Activated T-helper 1 cell treated with anti-CD3 and anti-CD28 coated beads, Interleukin-12 subunit alpha, Interleukin-12 subunit beta, Interleukin-2, Interleukin-4 antibody, amounts not matched to agents 30 ng/mL and 10 ng/mL and 1 ng/mL, durations not matched to agents 14 hours and 24 hours and 36 hours (primary cell): ENCODE measurements at regions of chr3 and their contacts with region 1.

Region 1: GRCh38 chr3:50950591-50950990 is 275.9 kb downstream of the DOCK3 start:
- DNase-seq: no peak
- H3K4me3 Mint-ChIP-seq: peak overlapping the region; percentile 67
- H3K27ac Mint-ChIP-seq: no peak overlapping the region
- H3K4me1 Mint-ChIP-seq: peaks cover 15% of the 10 kb centered on the region
- H3K27me3 Mint-ChIP-seq: peaks cover 8% of the 10 kb centered on the region

Region 2: DNA sequence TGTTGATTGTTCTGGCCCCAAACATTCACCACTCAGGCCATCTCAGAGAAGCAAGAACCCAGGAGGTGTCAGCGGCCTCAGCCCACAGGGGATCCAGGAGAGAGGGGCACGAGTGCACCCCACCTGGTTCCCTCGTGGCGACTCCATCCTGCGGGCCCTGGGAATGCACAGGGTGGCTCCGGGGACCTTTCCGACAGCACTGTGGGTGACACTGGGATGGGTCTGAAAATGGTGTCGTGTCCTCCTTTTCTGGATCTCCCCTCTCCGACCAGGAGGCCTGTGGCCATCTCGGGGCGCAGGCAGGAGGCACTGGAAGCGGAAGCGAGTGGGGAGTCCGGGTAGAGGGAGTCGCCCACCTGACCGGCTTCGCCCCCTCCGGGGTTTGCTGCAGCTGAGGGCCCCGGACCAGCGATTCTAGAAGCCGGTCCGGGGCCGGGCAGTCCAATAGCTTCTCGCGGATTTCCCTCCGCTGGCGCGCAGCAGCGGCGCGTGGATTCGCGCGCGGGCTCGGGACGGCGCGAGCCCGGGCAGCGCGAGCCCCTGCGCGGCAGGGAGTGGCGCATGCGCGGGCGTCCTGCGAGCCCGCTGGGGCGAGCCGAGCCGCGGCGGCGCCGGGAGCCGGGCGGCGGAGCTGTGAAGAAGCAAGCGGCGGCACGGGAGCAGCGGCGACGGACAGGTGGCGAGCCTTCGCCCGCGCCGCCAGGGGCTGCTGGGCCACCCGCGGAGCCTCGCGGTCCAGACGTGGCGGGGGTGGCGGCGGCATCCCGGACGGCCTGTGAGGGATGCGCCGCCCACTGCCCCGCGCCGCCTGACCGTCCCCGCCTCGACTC is 276.0 kb before region 1 on chr3 and contains the start of gene DOCK3:
- intact Hi-C with region 1: loop called (anchors 10 kb)
- DNase-seq: peak; percentile 59
- H3K4me3 Mint-ChIP-seq: peak within 1 kb of the TSS; percentile 80
- H3K27ac Mint-ChIP-seq: peak within 1 kb of the TSS; percentile 31
- H3K4me1 Mint-ChIP-seq: peaks cover 17% of the 10 kb centered on the region
- H3K27me3 Mint-ChIP-seq: peaks cover 63% of the 10 kb centered on the region
- total RNA-seq, gene DOCK3: 1.5 and 1.6 TPM in 2 replicates

Region 3: DNA sequence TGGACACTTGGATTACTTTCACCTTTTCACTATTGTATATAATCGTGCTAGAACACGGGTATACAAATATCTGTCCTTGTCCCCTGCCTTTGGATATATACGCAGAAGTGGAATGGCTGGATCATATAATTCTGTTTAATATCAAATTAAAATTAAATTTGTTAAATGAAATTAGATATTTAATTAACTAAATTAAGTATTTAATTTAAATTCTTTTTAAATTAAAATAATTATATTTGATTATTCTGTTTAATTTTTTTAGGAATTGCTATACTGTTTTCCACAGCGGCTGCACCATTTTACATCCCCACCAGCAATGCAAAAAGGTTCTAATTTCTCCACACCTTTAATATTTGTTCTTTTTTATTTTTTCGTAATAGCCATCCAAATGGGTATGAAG is 191.6 kb before region 1 on chr3:
- intact Hi-C with region 1: loop called (anchors 10 kb)
- DNase-seq: no peak
- H3K4me3 Mint-ChIP-seq: no peak overlapping the region
- H3K27ac Mint-ChIP-seq: no peak overlapping the region
- H3K4me1 Mint-ChIP-seq: no peaks in the 10 kb centered on the region
- H3K27me3 Mint-ChIP-seq: no peaks in the 10 kb centered on the region